HCT116 (cell line): ENCODE measurements at regions of chr3 and their contacts with region 1.

Region 1: DNA sequence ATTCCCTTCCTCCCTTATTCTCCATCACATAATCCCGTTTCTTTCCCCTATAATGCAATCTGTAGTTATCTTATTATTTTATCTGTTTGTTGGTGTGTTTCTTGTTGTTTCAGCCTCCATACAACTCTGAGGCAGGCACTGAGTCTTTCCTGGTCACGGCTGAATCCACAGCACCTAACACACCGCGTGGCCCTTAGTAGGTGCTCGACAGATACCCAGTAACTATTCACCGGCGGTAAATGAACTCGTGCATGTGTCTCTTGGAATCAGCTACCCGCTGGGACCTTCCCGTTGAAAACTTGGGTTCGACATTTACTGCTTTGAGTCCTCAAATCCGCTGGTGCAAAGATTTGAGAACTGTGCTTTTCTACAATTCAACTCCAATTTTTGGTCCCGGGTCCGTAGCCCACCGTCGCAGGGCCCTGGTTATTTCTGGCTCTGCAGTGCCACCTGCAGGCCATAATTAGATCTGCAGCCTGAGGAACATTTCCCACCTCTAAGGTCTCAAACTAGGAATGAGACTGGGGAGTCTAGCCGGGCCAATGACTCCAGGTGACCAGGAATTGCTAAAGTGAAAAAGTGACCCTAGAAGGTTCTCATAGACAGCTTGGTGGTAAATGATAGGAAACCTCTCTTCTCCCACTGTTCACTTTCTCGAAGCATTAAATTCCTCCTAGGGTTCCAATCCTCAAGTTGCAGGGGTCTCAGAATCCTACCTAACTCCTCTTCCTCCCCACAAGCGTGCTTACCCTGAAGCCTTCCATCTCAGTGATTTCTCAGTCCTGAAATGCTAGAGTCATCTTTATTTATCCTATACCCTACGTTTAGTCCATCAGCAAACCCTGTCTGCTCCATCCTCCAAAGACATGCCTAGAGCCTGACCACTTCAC is 40.0 kb upstream of the TRH start:
- DNase-seq: peak; percentile 12
- ATAC-seq: peak; percentile 82
- H3K4me3 ChIP-seq: no peak overlapping the region
- H3K27ac ChIP-seq: no peak overlapping the region
- H3K4me1 ChIP-seq: peaks cover 0 to 3% of the 10 kb centered on the region in 2 experiments; a peak in 1 of 4 replicates
- H3K27me3 ChIP-seq: no peaks in the 10 kb centered on the region
- CTCF ChIP-seq: peak; percentile 81 to 98 (median 91)
- POLR2A ChIP-seq: no peak
- RAD21 ChIP-seq: peak; percentile 96

Region 2: DNA sequence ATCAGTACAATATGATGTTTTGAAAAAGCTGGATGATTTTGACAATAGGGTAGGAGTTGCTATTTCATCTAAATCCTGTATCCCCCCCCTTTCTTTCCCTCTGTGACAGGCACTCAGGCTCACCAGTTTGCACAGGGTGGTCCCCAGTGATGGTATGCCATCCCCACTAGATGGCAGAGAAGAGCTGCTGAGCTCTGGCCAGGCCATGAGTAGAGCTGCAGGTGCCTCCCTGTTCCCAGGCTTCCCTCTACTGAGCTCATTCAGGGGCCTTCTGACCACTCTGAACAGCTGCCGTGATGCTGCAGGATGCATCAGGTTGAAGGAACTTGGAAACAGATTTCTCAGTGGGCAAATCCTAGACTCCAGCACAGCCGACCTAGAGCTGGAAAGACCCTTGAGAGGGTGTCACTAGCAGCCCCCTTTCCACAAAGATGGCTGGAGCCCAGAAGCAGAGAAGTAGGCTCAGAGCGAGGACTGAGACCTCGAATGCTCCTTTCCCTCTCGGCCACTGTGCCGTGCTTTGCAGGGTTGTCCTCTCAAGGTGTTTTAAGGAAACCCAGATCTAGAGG is 551.1 kb before region 1 on chr3:
- CTCF ChIA-PET with region 1: interaction called, 3 read pairs
- POLR2A ChIA-PET with region 1: no interaction called
- RAD21 ChIA-PET with region 1: no interaction called
- intact Hi-C with region 1: loop called (anchors 5 kb)
- DNase-seq: peak; percentile 19
- ATAC-seq: peak; percentile 99
- H3K4me3 ChIP-seq: no peak overlapping the region
- H3K27ac ChIP-seq: no peak overlapping the region
- H3K4me1 ChIP-seq: peaks cover 7 to 12% of the 10 kb centered on the region in 2 experiments
- H3K27me3 ChIP-seq: no peaks in the 10 kb centered on the region
- CTCF ChIP-seq: peak; percentile 59 to 92 (median 85); a peak in 5 of 6 replicates
- POLR2A ChIP-seq: no peak
- RAD21 ChIP-seq: peak; percentile 78

Region 3: GRCh38 chr3:129650256-129650872 is 284.1 kb before region 1 on chr3:
- CTCF ChIA-PET with region 1: no interaction called
- POLR2A ChIA-PET with region 1: no interaction called
- RAD21 ChIA-PET with region 1: no interaction called
- intact Hi-C with region 1: loop called (anchors 1 kb)
- DNase-seq: peak; percentile 65
- ATAC-seq: peak; percentile 58
- H3K4me3 ChIP-seq: no peak overlapping the region
- H3K27ac ChIP-seq: peak overlapping the region; percentile 77
- H3K4me1 ChIP-seq: peaks cover 37 to 43% of the 10 kb centered on the region in 2 experiments
- H3K27me3 ChIP-seq: no peaks in the 10 kb centered on the region
- CTCF ChIP-seq: peak; percentile 66 to 93 (median 80)
- POLR2A ChIP-seq: no peak
- RAD21 ChIP-seq: peak; percentile 92